ENCODE measurements at regions of chr7 and their contacts with region 1.

Region 1: GRCh38 chr7:51162724-51163329 is 153.8 kb downstream of the COBL start:
- DNase-seq: peak; percentile 46
- CTCF ChIP-seq: peak; percentile 93

Region 2: DNA sequence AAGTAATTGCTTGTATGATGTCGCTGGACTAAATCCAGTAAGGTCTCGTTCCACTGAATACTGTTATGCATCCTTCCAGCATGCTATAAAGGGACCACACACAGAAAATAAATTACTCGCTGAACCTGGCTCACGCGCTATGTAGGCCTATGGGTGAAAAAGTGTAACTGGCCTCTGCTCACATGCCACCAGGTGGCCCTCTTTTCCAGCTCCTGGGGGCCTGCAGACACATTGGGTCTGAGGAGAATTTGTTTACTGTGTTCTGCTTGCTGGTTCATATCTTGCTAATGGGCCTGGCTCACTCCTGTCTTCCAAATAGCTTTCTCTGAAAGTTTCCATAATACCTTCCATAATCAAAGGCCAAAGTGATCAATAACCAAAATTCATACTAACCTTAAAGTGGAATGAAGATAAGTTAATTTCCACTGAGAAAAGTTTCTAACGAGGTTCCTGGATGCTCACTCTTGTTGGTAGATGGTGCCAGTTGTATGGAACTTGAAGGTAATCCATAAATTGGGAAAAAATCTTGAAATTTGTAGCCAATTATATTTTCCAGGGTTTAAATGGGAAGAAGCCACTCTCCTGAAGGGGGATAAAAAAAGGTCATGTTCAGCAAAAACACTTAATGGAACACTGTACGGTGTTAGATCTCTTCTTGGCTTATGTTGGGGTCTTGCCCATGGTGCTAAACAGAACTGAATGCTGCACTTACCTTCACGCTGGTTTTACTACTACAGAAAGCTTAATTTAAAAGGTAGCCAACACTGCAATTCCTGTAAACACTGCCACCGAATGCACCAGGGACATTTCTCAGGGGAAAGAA is 1042.8 kb before region 1 on chr7:
- CTCF ChIA-PET with region 1: interaction called, 13 read pairs
- POLR2A ChIA-PET with region 1: no interaction called
- DNase-seq: peak; percentile 22
- CTCF ChIP-seq: peak; percentile 38

Region 3: DNA sequence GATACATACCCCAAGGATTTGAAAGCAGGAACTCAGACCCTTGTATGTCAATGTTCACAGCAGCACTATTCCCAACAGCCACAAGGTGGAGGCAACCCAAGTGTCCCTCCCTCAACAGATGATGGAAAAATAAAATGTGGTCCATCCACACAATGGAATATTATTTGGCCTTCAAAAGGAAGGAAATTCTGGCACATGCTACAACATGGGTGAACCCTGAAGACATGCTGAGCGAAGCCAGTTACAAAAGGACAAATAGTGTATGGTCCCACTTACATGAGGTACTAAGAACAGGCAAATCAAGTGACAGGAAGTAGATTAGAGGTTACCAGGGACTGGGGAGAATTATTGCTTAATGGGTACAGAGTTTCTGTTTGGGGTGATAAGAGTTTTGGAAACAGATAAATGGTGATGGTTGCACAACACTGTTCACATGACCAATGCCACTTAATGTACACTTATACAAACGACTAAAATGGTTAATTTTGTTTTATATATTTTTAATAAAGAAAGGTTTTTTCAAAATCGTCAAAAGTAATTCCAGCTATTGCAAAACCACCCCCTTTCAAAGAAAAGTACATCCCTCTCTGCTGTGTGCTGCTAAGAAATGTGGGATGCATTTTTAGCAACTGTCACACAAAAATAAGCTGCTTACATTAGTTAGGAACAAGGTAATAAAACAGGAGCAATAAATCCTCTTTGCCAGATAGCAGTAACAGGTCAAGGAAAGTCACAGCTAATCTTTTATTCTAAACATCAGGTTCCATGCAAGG is 465.8 kb before region 1 on chr7:
- CTCF ChIA-PET with region 1: interaction called, 10 read pairs
- POLR2A ChIA-PET with region 1: no interaction called
- DNase-seq: no peak
- CTCF ChIP-seq: peak; percentile 25

Region 4: GRCh38 chr7:50921114-50921813 is 241.6 kb before region 1 on chr7:
- CTCF ChIA-PET with region 1: no interaction called
- POLR2A ChIA-PET with region 1: no interaction called
- DNase-seq: no peak
- CTCF ChIP-seq: no peak

Region 5: DNA sequence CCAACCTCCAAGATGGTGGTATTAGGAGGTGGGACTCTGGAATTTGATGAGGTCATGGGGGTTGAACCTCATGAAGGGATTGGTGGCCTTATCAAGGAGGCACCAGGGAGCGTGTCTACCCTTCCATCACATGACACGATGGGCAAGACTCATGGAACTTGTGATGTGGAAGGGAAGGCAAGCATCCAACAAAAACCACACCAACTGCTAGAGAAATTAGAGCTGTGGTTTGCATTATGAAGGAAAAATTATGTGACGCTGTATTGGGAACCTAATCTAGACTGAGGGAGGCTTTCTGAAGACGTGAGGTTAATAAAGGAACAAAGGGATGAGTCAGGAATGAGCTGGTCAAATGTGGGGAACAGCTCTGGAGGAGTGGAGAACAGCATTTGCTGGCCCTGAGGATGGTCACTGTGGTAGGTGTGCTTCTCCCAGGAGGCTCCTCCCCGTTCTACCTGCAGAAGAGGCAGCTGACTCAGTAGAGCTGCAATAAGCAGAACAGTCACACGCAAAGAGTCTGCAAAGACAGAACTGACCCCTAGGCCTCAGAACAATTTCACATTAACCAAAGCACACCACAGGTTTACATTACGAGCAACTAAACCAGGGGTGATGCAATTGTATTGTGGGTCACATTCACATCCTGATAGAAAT is 143.5 kb before region 1 on chr7:
- CTCF ChIA-PET with region 1: no interaction called
- POLR2A ChIA-PET with region 1: no interaction called
- DNase-seq: no peak
- CTCF ChIP-seq: no peak

Region 6: DNA sequence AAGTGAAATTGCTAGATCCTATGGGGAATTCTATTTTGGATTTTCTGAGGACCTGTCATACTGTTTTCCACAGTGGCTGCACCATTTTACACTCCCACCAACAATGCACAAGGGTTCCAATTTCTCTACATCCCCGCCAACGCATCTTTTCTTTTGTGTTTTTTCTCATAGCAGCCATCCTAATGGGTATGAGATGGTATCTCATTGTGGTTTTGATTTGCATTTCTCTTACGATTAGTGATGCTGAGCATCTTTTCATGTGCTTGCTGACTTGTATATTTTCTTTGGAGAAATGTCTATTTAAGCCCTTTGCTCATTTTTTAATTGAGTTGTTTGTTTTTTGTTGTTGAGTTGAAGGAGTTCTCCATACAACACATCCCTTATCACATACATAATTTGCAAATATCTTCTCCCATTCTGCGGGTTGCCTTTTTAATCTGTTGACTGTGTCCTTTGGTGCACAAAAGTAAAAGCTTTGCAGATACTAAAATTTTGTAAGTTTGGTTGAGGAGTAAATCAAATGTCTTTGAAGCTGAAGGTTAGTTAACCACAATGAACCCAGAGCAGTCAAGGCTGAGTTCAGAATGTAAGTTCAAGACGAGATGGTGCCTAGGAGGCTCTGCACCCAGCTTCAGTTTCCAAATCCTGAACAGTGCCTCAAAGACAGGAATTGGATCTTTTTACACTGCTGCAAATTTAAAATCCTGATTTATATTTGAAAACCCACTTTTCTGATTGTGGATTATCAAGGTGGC is 41.6 kb before region 1 on chr7:
- CTCF ChIA-PET with region 1: no interaction called
- POLR2A ChIA-PET with region 1: no interaction called
- DNase-seq: no peak
- CTCF ChIP-seq: no peak

Region 7: DNA sequence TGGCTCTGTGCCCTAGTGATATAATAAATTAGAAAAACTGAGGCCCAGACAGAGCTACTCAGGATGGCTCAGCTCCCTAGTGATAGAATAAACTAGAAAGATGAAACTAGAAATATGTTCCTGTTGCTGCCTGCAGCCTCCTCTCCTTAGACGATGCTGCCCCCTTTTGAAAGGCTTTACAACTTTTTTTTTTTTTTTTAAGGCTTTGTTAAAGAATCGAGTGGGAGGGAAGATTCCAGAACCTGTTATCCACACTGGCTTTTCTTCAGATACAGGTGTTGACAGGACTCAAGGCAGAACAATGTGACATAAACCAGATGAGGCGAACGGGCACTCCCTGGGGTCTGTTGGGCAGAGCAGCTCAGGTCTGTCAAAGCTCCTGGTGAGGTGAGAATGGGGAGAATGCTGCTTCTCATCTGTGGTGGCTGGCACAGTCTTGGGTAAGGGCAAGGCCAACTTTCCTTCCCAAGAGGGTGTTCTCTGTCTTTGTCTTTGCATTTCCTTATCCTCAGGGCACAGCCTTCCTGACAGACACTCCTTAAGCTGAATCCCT is 21.3 kb before region 1 on chr7:
- CTCF ChIA-PET with region 1: interaction called, 40 read pairs
- POLR2A ChIA-PET with region 1: no interaction called
- DNase-seq: no peak
- CTCF ChIP-seq: no peak

Region 8: GRCh38 chr7:51182636-51183166 is 19.9 kb after region 1 on chr7:
- CTCF ChIA-PET with region 1: interaction called, 74 read pairs
- POLR2A ChIA-PET with region 1: no interaction called
- DNase-seq: no peak
- CTCF ChIP-seq: no peak

Region 9: DNA sequence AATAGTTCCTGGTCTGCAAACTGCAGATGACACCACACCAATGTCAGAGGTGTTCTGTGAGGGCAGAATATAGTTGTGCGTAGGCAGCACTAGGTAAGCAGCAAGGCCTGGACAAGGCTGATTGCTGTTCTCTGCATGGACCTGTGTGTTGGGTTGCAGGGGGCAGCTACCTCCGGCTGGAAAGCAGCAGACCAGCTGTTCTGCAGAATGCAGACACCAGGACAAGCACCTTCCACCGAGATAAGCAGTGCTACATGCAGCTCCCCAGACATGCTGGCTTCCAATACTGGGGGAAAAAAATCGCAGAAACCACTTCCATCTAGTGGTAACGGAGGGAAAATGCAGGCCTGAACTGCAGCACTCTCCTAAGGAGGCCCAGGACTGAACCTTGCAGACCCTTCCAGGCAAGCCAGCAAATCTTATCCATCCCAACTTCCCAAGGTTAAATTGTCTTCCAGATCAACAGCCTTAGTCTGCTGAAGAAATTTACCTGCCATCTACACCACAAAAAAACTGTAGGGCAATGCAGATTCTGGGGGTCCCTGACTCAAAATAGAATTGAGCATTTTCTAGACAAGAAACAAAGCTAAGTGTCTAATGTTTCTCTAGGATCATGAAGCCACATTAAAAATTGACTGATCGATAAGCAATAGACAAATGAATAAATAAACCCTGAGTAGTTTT is 204.2 kb after region 1 on chr7:
- CTCF ChIA-PET with region 1: interaction called, 88 read pairs
- POLR2A ChIA-PET with region 1: no interaction called
- DNase-seq: peak; percentile 56
- CTCF ChIP-seq: peak; percentile 56